Activated CD8-positive, alpha-beta T cell treated with anti-CD3 and anti-CD28 coated beads for 36 hours (primary cell): ENCODE measurements at regions of chr18 and their contacts with region 1.

Region 1: DNA sequence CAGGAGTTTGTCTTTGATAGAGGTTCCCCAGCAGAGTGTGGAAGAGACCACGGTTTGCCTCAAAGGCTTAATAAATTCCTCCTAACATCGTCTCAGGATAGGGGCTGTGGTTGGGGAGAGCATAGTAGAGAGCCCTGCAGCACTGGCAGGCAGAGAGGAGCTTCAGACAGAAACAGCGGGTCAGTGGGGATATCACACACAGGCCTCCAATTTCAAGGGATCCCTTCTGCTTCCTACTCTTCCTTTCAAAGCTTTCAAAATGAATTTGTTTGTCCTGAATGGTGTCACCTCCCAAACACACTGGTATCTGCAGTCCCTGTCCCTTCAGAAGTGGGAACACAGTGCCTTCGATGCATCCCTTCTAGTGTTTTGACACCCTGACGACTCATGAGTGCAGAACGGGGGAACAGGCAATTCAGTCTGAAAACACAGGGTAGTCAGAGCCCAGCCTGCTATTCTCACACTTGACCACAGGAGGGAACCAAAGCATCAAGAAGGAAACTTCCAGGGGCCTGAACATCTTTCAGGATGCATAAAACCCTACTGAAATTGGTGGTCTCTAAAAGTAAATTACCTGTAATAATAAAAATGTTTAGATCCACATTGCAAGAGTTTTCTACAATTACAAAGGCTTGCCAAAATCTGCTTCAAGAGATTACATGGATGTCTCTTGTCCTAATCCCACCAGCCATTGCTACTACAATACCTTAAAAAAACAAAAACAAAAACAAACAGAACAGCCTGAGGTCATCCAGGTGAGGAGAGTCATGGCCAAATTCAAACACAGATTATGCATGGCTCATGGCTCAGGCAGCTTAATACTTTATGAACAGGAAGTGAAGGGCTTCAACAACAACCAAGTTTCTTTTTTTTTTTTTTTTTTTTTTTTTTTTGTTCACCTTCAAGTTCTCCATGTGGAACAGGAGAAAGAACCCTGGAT is 49.8 kb downstream of the SLC14A2 start:
- DNase-seq: peak; percentile 80
- ATAC-seq: peak; percentile 56
- H3K4me3 Mint-ChIP-seq: no peak overlapping the region
- H3K27ac Mint-ChIP-seq: peak overlapping the region; percentile 61
- H3K4me1 Mint-ChIP-seq: peaks cover 50% of the 10 kb centered on the region
- H3K27me3 Mint-ChIP-seq: no peaks in the 10 kb centered on the region
- CTCF ChIP-seq: peak; percentile 91

Region 2: GRCh38 chr18:45621061-45621511 is 44.0 kb before region 1 on chr18:
- CTCF ChIA-PET with region 1: interaction called, 12 read pairs
- POLR2A ChIA-PET with region 1: no interaction called
- intact Hi-C with region 1: no loop called
- DNase-seq: peak; percentile 46
- ATAC-seq: peak; percentile 92
- H3K4me3 Mint-ChIP-seq: no peak overlapping the region
- H3K27ac Mint-ChIP-seq: no peak overlapping the region
- H3K4me1 Mint-ChIP-seq: no peaks in the 10 kb centered on the region
- H3K27me3 Mint-ChIP-seq: peaks cover 2% of the 10 kb centered on the region
- CTCF ChIP-seq: peak; percentile 78

Region 3: GRCh38 chr18:45722899-45723298 is 57.8 kb after region 1 on chr18:
- CTCF ChIA-PET with region 1: interaction called, 55 read pairs
- POLR2A ChIA-PET with region 1: no interaction called
- intact Hi-C with region 1: no loop called
- DNase-seq: peak; percentile 85
- ATAC-seq: peak; percentile 100
- H3K4me3 Mint-ChIP-seq: no peak overlapping the region
- H3K27ac Mint-ChIP-seq: no peak overlapping the region
- H3K4me1 Mint-ChIP-seq: no peaks in the 10 kb centered on the region
- H3K27me3 Mint-ChIP-seq: peaks cover 6% of the 10 kb centered on the region
- CTCF ChIP-seq: peak; percentile 80

Region 4: GRCh38 chr18:45850021-45850420 is 184.9 kb after region 1 on chr18:
- CTCF ChIA-PET with region 1: interaction called, 11 read pairs
- POLR2A ChIA-PET with region 1: no interaction called
- intact Hi-C with region 1: no loop called
- DNase-seq: no peak
- ATAC-seq: peak; percentile 34
- H3K4me3 Mint-ChIP-seq: no peak overlapping the region
- H3K27ac Mint-ChIP-seq: no peak overlapping the region
- H3K4me1 Mint-ChIP-seq: peaks cover 11% of the 10 kb centered on the region
- H3K27me3 Mint-ChIP-seq: no peaks in the 10 kb centered on the region
- CTCF ChIP-seq: no peak

Region 5: GRCh38 chr18:45910405-45911023 is 245.4 kb after region 1 on chr18:
- CTCF ChIA-PET with region 1: interaction called, 60 read pairs
- POLR2A ChIA-PET with region 1: no interaction called
- intact Hi-C with region 1: no loop called
- DNase-seq: peak; percentile 73
- ATAC-seq: peak; percentile 94
- H3K4me3 Mint-ChIP-seq: no peak overlapping the region
- H3K27ac Mint-ChIP-seq: no peak overlapping the region
- H3K4me1 Mint-ChIP-seq: no peaks in the 10 kb centered on the region
- H3K27me3 Mint-ChIP-seq: no peaks in the 10 kb centered on the region
- CTCF ChIP-seq: peak; percentile 88

Region 6: DNA sequence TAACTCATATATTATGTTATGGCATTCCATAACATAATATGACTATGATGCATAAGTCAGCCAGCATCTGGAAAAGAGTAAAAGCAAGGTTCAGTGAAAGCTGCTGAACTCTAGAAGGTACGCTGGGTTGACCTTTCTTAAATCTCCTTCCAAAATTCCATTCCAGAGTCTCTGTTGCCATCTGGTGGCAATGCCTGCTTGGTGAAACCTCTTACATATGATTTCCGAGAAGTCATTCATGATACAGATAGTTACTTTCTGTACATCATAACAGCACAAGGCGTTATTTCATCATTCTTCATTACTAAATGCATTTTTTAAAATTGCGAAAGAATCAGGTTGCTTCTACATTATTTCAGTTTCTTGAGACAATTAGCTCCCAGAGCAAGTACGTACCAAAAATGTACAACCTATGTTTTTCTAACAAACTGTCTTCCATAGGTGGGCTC is 309.0 kb after region 1 on chr18:
- CTCF ChIA-PET with region 1: interaction called, 15 read pairs
- POLR2A ChIA-PET with region 1: interaction called, 3 read pairs
- intact Hi-C with region 1: loop called (anchors 5 kb)
- DNase-seq: peak; percentile 88
- ATAC-seq: peak; percentile 90
- H3K4me3 Mint-ChIP-seq: no peak overlapping the region
- H3K27ac Mint-ChIP-seq: peak overlapping the region; percentile 82
- H3K4me1 Mint-ChIP-seq: peaks cover 9% of the 10 kb centered on the region
- H3K27me3 Mint-ChIP-seq: no peaks in the 10 kb centered on the region
- CTCF ChIP-seq: peak; percentile 68